ENCODE measurements at regions of chr2 and their contacts with region 1.

Region 1: GRCh38 chr2:37570773-37571586 is 100.5 kb downstream of the CDC42EP3 start:
- DNase-seq: peak; percentile 91
- ATAC-seq: peak; percentile 90
- H3K4me3 ChIP-seq: no peak overlapping the region
- H3K27ac ChIP-seq: peak overlapping the region; percentile 88
- H3K4me1 ChIP-seq: peaks cover 44% of the 10 kb centered on the region
- H3K27me3 ChIP-seq: no peaks in the 10 kb centered on the region
- CTCF ChIP-seq: no peak

Region 2: GRCh38 chr2:37456479-37456878 is 114.5 kb before region 1 on chr2:
- CTCF ChIA-PET with region 1: no interaction called
- POLR2A ChIA-PET with region 1: no interaction called
- intact Hi-C with region 1: loop called (anchors 5 kb)
- DNase-seq: no peak
- ATAC-seq: no peak
- H3K4me3 ChIP-seq: no peak overlapping the region
- H3K27ac ChIP-seq: no peak overlapping the region
- H3K4me1 ChIP-seq: peaks cover 48% of the 10 kb centered on the region
- H3K27me3 ChIP-seq: no peaks in the 10 kb centered on the region
- CTCF ChIP-seq: no peak

Region 3: DNA sequence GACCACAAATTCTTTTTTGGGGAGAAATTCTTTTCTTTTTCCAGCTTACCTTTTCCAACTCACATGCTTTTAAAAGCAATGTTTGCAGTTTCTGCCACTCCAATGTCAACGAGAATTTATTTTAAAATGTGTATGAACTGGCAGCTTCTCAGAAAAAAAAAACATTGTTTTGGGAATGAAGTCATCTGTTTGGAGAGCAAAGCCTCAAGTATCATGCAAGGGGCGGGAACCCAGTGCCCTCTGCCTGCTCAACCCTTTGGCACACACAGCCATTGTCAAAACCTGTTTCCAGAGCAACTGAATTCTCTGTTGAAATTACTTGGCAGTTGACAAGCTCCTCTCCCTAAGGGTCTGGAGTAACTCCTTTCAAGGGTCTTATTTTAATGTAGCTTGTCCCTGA is 98.0 kb before region 1 on chr2:
- CTCF ChIA-PET with region 1: interaction called, 3 read pairs
- POLR2A ChIA-PET with region 1: interaction called, 9 read pairs
- intact Hi-C with region 1: loop called (anchors 5 kb)
- DNase-seq: peak; percentile 92
- ATAC-seq: peak; percentile 92
- H3K4me3 ChIP-seq: peak overlapping the region; percentile 17; the same call in 1 of the 2 replicates
- H3K27ac ChIP-seq: peak overlapping the region; percentile 82
- H3K4me1 ChIP-seq: peaks cover 35% of the 10 kb centered on the region
- H3K27me3 ChIP-seq: no peaks in the 10 kb centered on the region
- CTCF ChIP-seq: no peak

Region 4: DNA sequence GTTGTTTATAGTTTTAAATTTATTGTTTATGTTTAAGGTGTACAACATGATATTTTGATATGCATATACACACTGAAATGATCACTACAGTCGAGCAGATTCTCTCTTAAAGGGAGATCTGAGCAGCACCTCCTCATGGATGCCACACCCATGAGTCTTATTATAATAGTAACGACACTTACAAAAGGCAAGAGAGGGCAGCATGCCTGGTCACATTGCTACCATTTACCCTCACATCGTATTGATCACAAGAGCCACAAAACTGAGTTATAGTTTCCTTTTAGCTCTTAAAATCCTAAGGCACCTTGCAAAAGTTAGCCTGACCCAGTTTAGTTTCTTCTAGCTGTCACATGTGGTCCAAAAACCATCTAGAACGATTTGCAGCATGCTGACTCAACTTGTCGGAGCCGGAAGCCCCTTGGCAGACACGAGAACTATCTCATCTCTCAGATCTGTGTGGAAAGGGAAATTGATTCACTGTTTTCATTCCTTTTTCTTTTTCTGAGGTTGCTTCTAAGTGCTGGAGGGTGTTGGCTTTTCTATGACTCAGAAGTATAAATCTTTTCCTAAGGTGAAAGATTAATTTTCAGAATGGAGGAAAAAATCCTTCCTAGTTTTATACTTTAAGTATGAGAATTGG is 15.1 kb after region 1 on chr2:
- CTCF ChIA-PET with region 1: interaction called, 4 read pairs
- POLR2A ChIA-PET with region 1: no interaction called
- intact Hi-C with region 1: loop called (anchors 2 kb)
- DNase-seq: peak; percentile 95
- ATAC-seq: peak; percentile 64
- H3K4me3 ChIP-seq: peak overlapping the region; percentile 41; the same call in 1 of the 2 replicates
- H3K27ac ChIP-seq: peak overlapping the region; percentile 90
- H3K4me1 ChIP-seq: peaks cover 84% of the 10 kb centered on the region
- H3K27me3 ChIP-seq: no peaks in the 10 kb centered on the region
- CTCF ChIP-seq: no peak

Region 5: GRCh38 chr2:37832590-37833197 is 261.7 kb after region 1 on chr2:
- CTCF ChIA-PET with region 1: no interaction called
- POLR2A ChIA-PET with region 1: no interaction called
- intact Hi-C with region 1: loop called (anchors 5 kb)
- DNase-seq: peak; percentile 94
- ATAC-seq: peak; percentile 99
- H3K4me3 ChIP-seq: no peak overlapping the region
- H3K27ac ChIP-seq: no peak overlapping the region
- H3K4me1 ChIP-seq: peaks cover 6% of the 10 kb centered on the region; the same call in 1 of the 2 replicates
- H3K27me3 ChIP-seq: no peaks in the 10 kb centered on the region
- CTCF ChIP-seq: peak; percentile 95

Measured in PC-3 (cell line).